MCF 10A (cell line): ENCODE measurements at regions of chr11 and their contacts with region 1.

Region 1: DNA sequence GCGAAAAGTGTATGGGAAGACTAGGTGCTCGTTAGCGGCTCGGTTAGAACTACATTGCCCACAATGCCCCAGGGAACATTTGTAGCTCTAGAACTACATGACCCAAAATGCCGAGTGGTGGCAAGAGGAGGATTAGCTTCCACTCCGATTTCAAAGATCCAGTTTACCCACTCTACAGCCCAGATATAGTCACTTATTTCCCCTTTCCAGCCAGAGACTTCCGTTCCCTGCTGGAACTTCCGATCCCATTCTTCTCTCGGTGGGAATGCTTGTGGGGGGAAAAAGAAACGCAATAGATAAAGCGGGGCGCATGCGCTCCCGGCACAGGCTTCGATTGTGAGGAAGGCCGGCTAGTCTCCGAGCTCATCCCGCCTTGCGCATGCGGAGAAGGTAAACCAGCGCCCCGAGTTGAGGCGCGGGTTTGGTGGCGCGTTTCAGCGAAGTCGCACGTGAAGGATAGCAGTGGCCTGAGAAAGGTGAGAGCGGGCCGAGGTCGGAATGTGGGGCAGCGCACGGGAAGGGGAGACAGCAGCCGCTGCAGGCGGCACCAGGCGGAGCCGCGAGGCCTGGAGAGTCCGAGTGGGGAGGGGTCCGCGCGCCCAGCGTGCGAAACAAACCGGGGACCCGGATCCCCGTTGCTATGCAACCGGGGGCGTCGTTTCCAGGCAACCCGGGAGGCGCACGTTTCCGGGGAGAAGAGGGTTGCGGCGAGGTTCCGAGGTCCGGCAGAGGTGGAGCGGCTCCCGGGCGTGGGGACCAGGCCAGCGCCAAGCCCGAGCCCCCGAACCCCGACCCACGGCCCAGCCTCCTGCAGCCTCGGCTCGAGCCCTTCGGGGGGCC is at the start of gene TMEM109:
- DNase-seq: peak; percentile 90
- H3K4me3 Mint-ChIP-seq: peak within 1 kb of the TSS; percentile 97
- H3K27ac Mint-ChIP-seq: peak within 1 kb of the TSS; percentile 95
- H3K4me1 Mint-ChIP-seq: peaks cover 23% of the 10 kb centered on the region
- H3K27me3 Mint-ChIP-seq: peaks cover 6% of the 10 kb centered on the region
- CTCF ChIP-seq: no peak
- total RNA-seq, gene TMEM109: 39.5 and 45.8 TPM in 2 replicates

Region 2: DNA sequence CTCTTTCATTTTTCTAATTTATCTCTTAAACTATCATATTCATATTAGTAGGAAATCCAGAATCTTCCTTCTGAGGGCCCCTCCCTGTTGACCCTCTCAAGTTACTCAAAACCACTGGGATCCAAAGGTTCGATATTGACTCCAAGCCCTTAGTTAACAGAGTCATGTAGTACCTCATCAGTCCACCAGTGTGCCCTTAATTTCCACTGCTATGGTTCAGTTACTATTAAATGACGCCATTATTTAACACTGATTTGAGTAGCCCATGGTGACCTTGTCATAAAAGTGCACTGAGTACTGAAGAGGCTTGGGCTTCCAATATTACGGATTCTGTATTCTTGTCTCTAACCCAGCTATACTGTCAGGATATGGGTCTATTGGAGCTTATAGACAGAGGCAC is 306.5 kb before region 1 on chr11:
- CTCF ChIA-PET with region 1: no interaction called
- POLR2A ChIA-PET with region 1: no interaction called
- intact Hi-C with region 1: no loop called
- DNase-seq: no peak
- H3K4me3 Mint-ChIP-seq: no peak overlapping the region
- H3K27ac Mint-ChIP-seq: no peak overlapping the region
- H3K4me1 Mint-ChIP-seq: no peaks in the 10 kb centered on the region
- H3K27me3 Mint-ChIP-seq: peaks cover 50% of the 10 kb centered on the region
- CTCF ChIP-seq: peak; percentile 10

Region 3: GRCh38 chr11:60899046-60899936 is 14.7 kb before region 1 on chr11:
- CTCF ChIA-PET with region 1: interaction called, 15 read pairs
- POLR2A ChIA-PET with region 1: interaction called, 69 read pairs
- intact Hi-C with region 1: no loop called
- DNase-seq: peak; percentile 64
- H3K4me3 Mint-ChIP-seq: no peak overlapping the region
- H3K27ac Mint-ChIP-seq: no peak overlapping the region
- H3K4me1 Mint-ChIP-seq: peaks cover 5% of the 10 kb centered on the region
- H3K27me3 Mint-ChIP-seq: no peaks in the 10 kb centered on the region
- CTCF ChIP-seq: peak; percentile 92

Region 4: GRCh38 chr11:60924110-60924905 is 10.3 kb after region 1 on chr11 and contains the start of gene TMEM132A:
- CTCF ChIA-PET with region 1: interaction called, 8 read pairs
- POLR2A ChIA-PET with region 1: interaction called, 10 read pairs
- intact Hi-C with region 1: loop called (anchors 1 kb)
- DNase-seq: peak; percentile 72
- H3K4me3 Mint-ChIP-seq: peak within 1 kb of the TSS; percentile 79
- H3K27ac Mint-ChIP-seq: no peak within 1 kb of the TSS
- H3K4me1 Mint-ChIP-seq: peaks cover 13% of the 10 kb centered on the region
- H3K27me3 Mint-ChIP-seq: no peaks in the 10 kb centered on the region
- CTCF ChIP-seq: no peak
- total RNA-seq, gene TMEM132A: 20.5 and 22.5 TPM in 2 replicates

Region 5: GRCh38 chr11:61161190-61162091 is 247.4 kb after region 1 on chr11 and contains the start of gene VPS37C:
- CTCF ChIA-PET with region 1: interaction called, 4 read pairs
- POLR2A ChIA-PET with region 1: interaction called, 43 read pairs
- intact Hi-C with region 1: loop called (anchors 10 kb)
- DNase-seq: peak; percentile 82
- H3K4me3 Mint-ChIP-seq: peak within 1 kb of the TSS; percentile 89
- H3K27ac Mint-ChIP-seq: peak within 1 kb of the TSS; percentile 96
- H3K4me1 Mint-ChIP-seq: peaks cover 27% of the 10 kb centered on the region
- H3K27me3 Mint-ChIP-seq: no peaks in the 10 kb centered on the region
- CTCF ChIP-seq: peak; percentile 4
- total RNA-seq, gene VPS37C: 20.5 and 23.3 TPM in 2 replicates

Region 6: DNA sequence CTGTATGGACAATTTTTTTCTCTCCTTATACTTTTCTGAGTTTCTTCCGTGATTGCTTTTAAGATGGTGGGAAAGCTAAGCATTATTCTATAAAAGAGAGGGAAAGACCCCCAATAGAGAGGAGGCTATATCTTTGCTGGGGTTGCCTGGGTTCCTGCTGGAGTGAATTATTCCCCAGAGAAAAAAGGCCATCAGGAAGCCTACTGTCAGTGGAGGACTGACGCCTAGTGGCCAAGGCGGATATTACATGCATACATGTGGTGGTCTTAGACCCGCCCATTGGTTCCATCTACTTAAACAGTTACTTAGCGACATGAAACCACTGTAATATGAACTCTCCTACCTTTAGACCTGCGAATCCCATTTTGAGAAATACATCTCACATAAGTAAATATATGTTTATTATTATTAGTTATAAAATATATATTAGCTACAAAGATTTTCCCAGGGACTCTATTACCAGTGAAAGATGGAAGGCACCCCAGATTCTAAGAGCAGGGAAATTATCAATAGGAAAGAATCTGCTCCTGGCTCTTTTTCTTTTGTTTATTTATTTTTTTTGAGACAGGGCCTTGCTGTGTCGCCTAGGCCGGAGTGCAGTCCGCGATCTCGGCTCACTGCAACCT is 273.6 kb after region 1 on chr11:
- CTCF ChIA-PET with region 1: interaction called, 4 read pairs
- POLR2A ChIA-PET with region 1: no interaction called
- intact Hi-C with region 1: loop called (anchors 1 kb)
- DNase-seq: peak; percentile 73
- H3K4me3 Mint-ChIP-seq: no peak overlapping the region
- H3K27ac Mint-ChIP-seq: no peak overlapping the region
- H3K4me1 Mint-ChIP-seq: no peaks in the 10 kb centered on the region
- H3K27me3 Mint-ChIP-seq: no peaks in the 10 kb centered on the region
- CTCF ChIP-seq: peak; percentile 88